Dorsolateral prefrontal cortex (tissue), 120 donors: ENCODE measurements at regions of chr2 and their contacts with region 1.

Region 1: GRCh38 chr2:177164584-177165052 is 48.0 kb upstream of the HNRNPA3 start:
- DNase-seq: peak; percentile 77 to 92 (median 86)
- H3K4me3 ChIP-seq: peak overlapping the region; percentile 21 to 75 (median 56)
- H3K27ac ChIP-seq: peak overlapping the region; percentile 70 to 100 (median 97)
- H3K27me3 ChIP-seq: no peaks in the 10 kb centered on the region
- CTCF ChIP-seq: peak; percentile 91 to 100 (median 99)

Region 2: DNA sequence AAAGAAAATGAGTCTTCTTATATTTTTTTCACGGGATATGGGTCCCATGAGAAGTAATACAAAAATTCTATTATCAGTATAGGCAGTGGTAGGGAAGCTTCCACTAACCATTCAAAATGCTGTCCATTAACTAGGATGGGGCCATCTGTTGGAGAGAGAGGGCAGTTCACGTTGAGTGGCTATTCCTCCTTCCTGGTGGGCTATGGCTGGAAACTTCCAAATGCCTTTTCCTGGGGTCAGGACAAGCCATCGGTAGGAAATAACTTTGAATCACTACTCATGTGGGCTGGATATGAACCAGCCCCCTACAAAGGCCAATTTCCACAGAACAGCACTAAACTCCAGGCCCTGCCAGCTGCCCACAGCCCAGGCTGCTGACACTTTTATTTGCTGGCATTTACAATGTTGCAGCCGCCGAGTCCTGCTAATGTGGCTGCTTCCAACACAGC is 108.1 kb before region 1 on chr2:
- intact Hi-C with region 1: no loop called
- DNase-seq: no peak
- H3K4me3 ChIP-seq: no peak overlapping the region
- H3K27ac ChIP-seq: no peak overlapping the region
- H3K27me3 ChIP-seq: peaks cover 0 to 4% (median 0%) of the 10 kb centered on the region in 45 donors
- CTCF ChIP-seq: no peak

Region 3: GRCh38 chr2:177263451-177264208 is 99.0 kb after region 1 on chr2:
- intact Hi-C with region 1: loop called (anchors 1 to 2 kb)
- DNase-seq: peak; percentile 94 to 98 (median 96)
- H3K4me3 ChIP-seq: peak overlapping the region; percentile 65 to 97 (median 88)
- H3K27ac ChIP-seq: peak overlapping the region; percentile 89 to 100 (median 99)
- H3K27me3 ChIP-seq: no peaks in the 10 kb centered on the region
- CTCF ChIP-seq: peak; percentile 67 to 93 (median 83)

Region 4: DNA sequence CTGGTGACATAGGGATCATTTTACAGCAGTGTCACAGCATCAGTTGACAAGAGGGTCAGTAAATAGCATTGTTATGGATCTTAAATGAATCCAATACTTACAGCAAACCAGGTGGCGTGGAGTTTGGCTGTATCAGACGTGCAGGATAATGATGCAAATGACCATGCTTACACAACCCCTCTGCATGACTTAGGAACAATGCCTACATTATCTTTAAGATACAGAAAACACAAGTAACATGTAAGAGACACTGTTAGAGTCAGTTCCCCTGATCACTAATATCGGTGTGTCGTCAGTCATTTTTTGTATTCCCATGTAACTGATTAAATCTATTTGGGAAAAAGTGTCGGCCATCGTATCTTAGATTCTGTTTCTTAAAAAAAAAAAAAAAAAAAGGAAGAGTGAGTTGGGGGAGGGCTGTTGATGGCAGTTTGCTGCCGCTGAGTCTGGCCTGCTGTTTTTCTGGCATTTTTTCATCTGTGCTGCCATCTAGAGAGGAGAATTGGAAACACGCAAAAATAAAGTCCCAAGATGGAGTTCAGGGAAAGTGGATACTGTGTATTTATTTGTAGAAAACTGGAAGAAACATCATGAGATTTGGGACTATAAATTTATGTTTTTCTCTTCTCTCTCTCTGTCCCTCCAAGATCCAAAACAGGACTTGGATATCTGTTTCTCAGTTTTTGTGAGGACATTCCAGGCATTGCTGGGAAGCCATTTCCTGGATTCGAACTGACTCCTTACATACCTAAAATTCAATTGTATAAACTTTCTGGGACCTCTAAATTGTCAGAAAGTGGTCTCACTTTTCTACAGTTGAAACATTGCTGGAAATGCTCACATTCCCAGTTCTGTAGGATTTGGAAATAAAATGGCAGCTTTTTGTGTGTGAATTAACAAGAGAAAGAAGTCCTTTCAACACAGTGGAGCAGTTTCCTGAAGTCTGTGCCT is 167.7 kb after region 1 on chr2:
- intact Hi-C with region 1: loop called (anchors 2 kb)
- DNase-seq: peak in 3 of 10 donors; percentile 26 to 36 (median 34)
- H3K4me3 ChIP-seq: peak overlapping the region in 47 of 59 donors; percentile 1 to 58 (median 33)
- H3K27ac ChIP-seq: peak overlapping the region in 53 of 59 donors; percentile 4 to 85 (median 60)
- H3K27me3 ChIP-seq: no peaks in the 10 kb centered on the region
- CTCF ChIP-seq: peak; percentile 53 to 87 (median 78)

Region 5: GRCh38 chr2:177604271-177605065 is 439.9 kb after region 1 on chr2:
- intact Hi-C with region 1: loop called in 1 of 2 experiments (anchors 10 kb)
- DNase-seq: peak in 1 of 10 donors; percentile 14
- H3K4me3 ChIP-seq: peak overlapping the region in 4 of 59 donors; percentile 9 to 28 (median 20)
- H3K27ac ChIP-seq: peak overlapping the region in 3 of 59 donors; percentile 13 to 38 (median 33)
- H3K27me3 ChIP-seq: no peaks in the 10 kb centered on the region
- CTCF ChIP-seq: peak; percentile 36 to 85 (median 72)

Region 6: GRCh38 chr2:177763532-177764265 is 599.1 kb after region 1 on chr2:
- intact Hi-C with region 1: loop called in 1 of 2 experiments (anchors 10 kb)
- DNase-seq: peak in 9 of 10 donors; percentile 32 to 73 (median 55)
- H3K4me3 ChIP-seq: peak overlapping the region in 12 of 59 donors; percentile 16 to 42 (median 24)
- H3K27ac ChIP-seq: no peak overlapping the region
- H3K27me3 ChIP-seq: peaks cover 0 to 6% (median 0%) of the 10 kb centered on the region in 45 donors
- CTCF ChIP-seq: peak; percentile 56 to 88 (median 79)